Activated CD4-positive, alpha-beta T cell treated with anti-CD3 and anti-CD28 coated beads for 36 hours (primary cell): ENCODE measurements at regions of chr2 and their contacts with region 1.

Region 1: DNA sequence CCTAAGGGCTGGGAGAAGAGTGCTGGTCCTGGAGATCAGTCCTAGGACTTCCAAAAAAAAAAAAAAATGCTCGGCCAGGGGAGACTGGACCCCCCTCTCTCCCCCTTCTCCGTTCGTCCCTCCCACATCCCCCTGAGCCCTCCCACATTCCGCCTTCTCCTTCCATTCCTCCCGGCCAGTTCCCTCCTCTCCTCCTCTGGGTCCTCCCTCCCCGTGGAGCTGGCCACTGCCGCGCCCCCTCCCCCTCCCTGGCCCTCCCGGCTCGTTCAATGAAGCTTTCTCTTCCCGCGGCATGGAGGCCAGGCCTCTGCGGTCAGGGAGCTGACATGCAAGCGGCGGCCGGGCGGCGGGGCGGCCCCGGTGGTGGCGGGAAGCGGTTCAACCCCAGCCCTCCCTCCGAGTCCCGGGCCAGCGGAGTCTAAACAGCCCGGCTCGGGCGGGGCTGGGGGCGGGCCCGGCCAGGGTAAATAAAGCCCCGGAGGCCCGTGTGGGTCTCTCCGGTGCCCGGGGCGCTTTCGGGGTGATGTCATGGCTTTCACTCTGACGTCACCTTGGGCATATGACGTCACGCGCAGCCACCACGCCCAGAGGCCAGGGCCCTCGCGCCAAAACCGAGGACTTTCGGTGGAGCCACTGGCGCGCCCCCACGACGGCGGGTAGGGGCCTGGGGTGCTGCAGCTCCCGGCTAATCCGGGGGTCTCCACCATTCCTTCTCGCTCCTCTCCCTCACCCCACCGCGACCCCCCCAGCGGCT is at the start of gene LOXL3:
- DNase-seq: peak; percentile 89
- ATAC-seq: peak; percentile 65
- H3K4me3 Mint-ChIP-seq: peak within 1 kb of the TSS; percentile 91
- H3K27ac Mint-ChIP-seq: peak within 1 kb of the TSS; percentile 91
- H3K4me1 Mint-ChIP-seq: peaks cover 9% of the 10 kb centered on the region
- H3K27me3 Mint-ChIP-seq: peaks cover 17% of the 10 kb centered on the region
- total RNA-seq, gene LOXL3: 0.86 to 0.96 TPM

Region 2: DNA sequence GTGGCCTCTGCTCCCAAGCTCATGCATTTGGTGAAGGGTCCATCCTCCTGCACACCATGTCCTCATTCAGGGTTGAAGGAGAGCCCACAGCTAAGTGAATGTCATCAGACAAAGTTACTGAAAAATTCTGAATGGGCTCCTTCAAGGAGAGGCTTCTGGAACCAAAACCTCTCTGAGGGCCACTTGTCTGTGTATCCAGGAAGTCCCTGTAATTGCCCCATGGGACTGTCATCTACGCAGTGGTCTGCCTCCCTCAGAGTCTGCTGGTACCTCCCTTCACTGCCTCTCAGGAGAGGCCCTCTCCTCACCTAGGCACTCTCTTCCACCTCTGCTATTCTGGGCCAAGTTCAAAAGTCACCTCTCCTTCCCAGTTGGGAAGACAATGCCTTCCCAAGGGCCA is 278.8 kb before region 1 on chr2:
- CTCF ChIA-PET with region 1: no interaction called
- POLR2A ChIA-PET with region 1: no interaction called
- intact Hi-C with region 1: no loop called
- DNase-seq: no peak
- ATAC-seq: no peak
- H3K4me3 Mint-ChIP-seq: no peak overlapping the region
- H3K27ac Mint-ChIP-seq: no peak overlapping the region
- H3K4me1 Mint-ChIP-seq: no peaks in the 10 kb centered on the region
- H3K27me3 Mint-ChIP-seq: no peaks in the 10 kb centered on the region

Region 3: DNA sequence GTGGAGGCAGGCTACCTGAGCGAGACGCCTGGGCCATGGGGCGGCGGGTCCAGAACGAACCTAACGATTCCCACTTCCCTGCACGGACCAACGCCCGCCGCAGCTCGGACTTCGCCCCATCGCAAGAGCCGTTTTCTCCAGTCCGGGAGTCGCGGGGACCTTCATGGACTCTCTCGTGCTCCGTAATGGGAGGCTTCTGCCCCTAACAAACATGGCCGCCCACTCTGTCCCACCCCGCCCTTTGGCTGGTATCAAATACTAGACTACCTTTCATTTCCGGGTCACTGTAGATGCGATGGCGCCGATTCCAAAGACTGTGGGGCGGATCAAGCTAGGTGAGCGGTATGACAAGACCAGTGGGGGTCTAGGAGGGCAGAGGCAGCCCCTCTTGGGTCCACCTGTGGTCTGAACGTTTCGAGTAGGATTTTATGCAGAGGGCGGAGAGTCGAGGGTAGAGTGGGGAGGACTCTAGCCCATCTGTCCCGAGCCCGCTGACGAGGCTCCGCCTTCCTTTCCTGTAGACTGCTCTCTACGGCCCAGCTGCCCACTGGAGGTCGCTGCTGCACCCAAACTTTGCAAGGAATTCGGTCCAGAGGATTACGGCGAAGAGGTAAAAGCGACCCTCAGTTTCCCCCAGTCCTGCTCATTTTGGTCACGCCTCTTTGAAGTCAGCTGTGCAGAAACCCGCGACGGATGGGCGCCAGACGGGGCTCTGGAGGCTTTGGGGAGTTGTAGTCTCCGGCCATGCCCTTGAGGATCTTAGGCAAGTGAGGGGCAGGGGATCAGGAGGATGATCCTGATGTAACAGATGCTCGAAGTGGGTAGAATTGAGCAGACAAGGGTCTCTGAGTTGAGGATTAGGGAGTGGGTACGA is 71.0 kb before region 1 on chr2 and contains the starts of genes CCDC142 and TTC31:
- CTCF ChIA-PET with region 1: interaction called, 3 read pairs
- POLR2A ChIA-PET with region 1: no interaction called
- intact Hi-C with region 1: loop called (anchors 1 to 2 kb)
- DNase-seq: peak; percentile 96
- ATAC-seq: peak; percentile 95
- H3K4me3 Mint-ChIP-seq: peak within 1 kb of the TSS; percentile 90
- H3K27ac Mint-ChIP-seq: peak within 1 kb of the TSS; percentile 99
- H3K4me1 Mint-ChIP-seq: peaks cover 31% of the 10 kb centered on the region
- H3K27me3 Mint-ChIP-seq: no peaks in the 10 kb centered on the region
- total RNA-seq, gene CCDC142: 9.7 to 13.2 TPM
- total RNA-seq, gene TTC31: 24.0 to 24.6 TPM

Region 4: GRCh38 chr2:74498500-74499266 is 55.4 kb before region 1 on chr2:
- CTCF ChIA-PET with region 1: no interaction called
- POLR2A ChIA-PET with region 1: interaction called, 3 read pairs
- intact Hi-C with region 1: loop called in 1 of 2 experiments (anchors 2 kb)
- DNase-seq: peak; percentile 49
- ATAC-seq: peak; percentile 63
- H3K4me3 Mint-ChIP-seq: peak overlapping the region; percentile 77
- H3K27ac Mint-ChIP-seq: peak overlapping the region; percentile 15
- H3K4me1 Mint-ChIP-seq: peaks cover 31% of the 10 kb centered on the region
- H3K27me3 Mint-ChIP-seq: peaks cover 50% of the 10 kb centered on the region

Region 5: DNA sequence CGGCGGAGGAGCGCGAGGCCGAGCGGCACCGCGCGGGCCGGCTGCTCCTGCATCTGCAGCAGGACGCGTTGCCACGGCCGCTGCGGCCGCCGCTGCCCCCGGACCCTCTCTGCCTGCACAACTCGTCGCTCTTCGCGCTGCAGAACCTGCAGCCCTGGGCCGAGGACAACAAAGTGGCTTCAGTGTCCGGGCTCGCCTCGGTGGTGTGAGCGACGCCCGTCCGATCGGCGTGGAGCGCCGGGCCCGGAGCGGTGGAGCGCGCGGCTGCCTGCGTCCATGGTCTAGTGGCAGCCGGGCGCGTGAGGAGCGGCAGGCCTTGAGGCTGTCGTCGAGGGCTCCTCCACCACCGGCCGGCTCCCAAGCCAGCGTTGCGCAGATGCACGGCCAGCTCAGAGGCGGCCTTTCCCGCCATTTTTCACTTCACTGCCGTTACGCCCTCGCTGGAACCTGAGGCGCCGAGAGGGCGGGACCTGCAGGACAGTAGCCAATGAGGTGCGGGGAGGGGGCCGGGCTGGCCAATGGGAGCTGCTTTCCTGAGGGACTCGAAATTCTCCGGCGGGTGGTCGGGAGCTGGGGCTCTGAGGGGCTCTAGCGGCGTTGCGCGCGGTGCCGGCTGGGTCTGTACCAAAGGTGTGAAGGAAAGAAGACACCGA is 38.0 kb before region 1 on chr2:
- CTCF ChIA-PET with region 1: interaction called, 3 read pairs
- POLR2A ChIA-PET with region 1: no interaction called
- intact Hi-C with region 1: loop called in 1 of 2 experiments (anchors 2 kb)
- DNase-seq: peak; percentile 84
- ATAC-seq: peak; percentile 85
- H3K4me3 Mint-ChIP-seq: peak overlapping the region; percentile 46
- H3K27ac Mint-ChIP-seq: no peak overlapping the region
- H3K4me1 Mint-ChIP-seq: peaks cover 14% of the 10 kb centered on the region
- H3K27me3 Mint-ChIP-seq: peaks cover 70% of the 10 kb centered on the region

Region 6: DNA sequence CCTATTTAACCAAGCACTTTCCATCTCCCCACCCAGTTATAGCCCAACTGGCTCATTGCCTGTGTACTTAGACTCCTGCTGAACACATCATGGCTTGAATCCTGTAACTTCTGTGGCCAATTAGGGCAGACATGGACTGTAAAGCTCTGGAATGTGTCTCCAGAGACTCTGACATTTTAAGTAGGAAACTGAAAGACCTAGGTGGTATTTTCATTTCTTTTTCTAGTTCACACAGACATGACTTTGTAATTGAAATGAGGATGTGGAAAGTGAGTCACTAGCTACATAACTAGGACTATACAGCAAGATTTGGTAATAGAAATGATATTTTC is 12.7 kb after region 1 on chr2:
- CTCF ChIA-PET with region 1: interaction called, 4 read pairs
- POLR2A ChIA-PET with region 1: interaction called, 3 read pairs
- intact Hi-C with region 1: loop called (anchors 1 to 2 kb)
- DNase-seq: no peak
- ATAC-seq: peak; percentile 65
- H3K4me3 Mint-ChIP-seq: no peak overlapping the region
- H3K27ac Mint-ChIP-seq: peak overlapping the region; percentile 78
- H3K4me1 Mint-ChIP-seq: peaks cover 32% of the 10 kb centered on the region
- H3K27me3 Mint-ChIP-seq: peaks cover 25% of the 10 kb centered on the region

Region 7: DNA sequence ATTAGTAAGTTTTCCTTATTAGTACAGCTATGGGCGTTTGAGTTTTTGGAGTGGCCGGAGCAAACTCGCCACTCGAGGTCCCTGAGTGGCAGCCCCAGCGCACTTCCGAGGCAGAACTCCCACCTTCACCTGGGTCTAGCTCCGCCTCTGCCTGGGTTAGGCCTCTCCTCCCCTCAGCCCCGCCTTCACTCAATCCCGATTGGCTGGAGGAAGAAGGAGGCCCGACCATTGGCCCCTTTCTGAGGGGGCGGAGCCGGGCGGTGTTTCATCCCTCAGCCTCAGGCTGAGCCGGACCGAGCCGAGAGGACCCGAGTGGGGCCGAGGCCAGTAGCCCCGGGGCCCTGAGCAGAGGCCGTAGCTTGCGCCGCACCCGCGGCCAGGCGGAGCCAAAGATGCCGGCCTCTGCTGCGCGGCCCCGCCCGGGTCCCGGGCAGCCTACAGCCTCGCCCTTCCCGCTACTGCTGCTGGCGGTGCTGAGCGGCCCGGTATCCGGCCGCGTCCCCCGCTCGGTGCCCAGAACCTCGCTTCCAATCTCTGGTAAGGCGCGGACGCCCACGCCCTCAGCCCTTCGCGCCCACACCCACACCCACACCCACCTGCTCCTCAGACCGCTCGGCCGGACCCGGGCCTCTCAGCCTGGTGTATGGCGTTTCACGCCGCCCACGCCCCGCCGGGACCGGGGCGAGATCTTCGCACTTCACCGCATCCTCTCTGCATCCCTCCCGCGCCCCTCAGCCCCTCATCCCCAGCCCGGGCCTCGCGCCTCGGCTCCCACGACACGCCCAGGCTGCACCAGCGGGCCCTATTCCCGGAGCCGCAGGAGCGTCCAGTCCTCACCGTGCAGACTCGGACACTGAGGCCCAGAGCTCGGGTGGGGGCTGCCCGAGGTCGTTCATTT is 100.2 kb after region 1 on chr2 and contains the start of gene SEMA4F:
- CTCF ChIA-PET with region 1: no interaction called
- POLR2A ChIA-PET with region 1: no interaction called
- intact Hi-C with region 1: loop called in 1 of 2 experiments (anchors 1 kb)
- DNase-seq: peak; percentile 97
- ATAC-seq: peak; percentile 100
- H3K4me3 Mint-ChIP-seq: peak within 1 kb of the TSS; percentile 76
- H3K27ac Mint-ChIP-seq: peak within 1 kb of the TSS; percentile 49
- H3K4me1 Mint-ChIP-seq: peaks cover 13% of the 10 kb centered on the region
- H3K27me3 Mint-ChIP-seq: peaks cover 7% of the 10 kb centered on the region
- total RNA-seq, gene SEMA4F: 5.7 to 7.4 TPM